PC-9 (cell line): ENCODE measurements at regions of chr15 and their contacts with region 1.

Region 1: GRCh38 chr15:75684642-75685041 is 28.0 kb downstream of the CSPG4 start:
- DNase-seq: no peak
- H3K4me3 ChIP-seq: no peak overlapping the region
- H3K27ac ChIP-seq: no peak overlapping the region
- H3K4me1 ChIP-seq: no peaks in the 10 kb centered on the region
- H3K27me3 ChIP-seq: no peaks in the 10 kb centered on the region
- CTCF ChIP-seq: no peak

Region 2: GRCh38 chr15:75204340-75205063 is 480.1 kb before region 1 on chr15:
- CTCF ChIA-PET with region 1: no interaction called
- POLR2A ChIA-PET with region 1: no interaction called
- intact Hi-C with region 1: no loop called
- DNase-seq: peak; percentile 89 to 93
- H3K4me3 ChIP-seq: peak overlapping the region; percentile 93
- H3K27ac ChIP-seq: peak overlapping the region; percentile 97
- H3K4me1 ChIP-seq: peaks cover 31% of the 10 kb centered on the region
- H3K27me3 ChIP-seq: no peaks in the 10 kb centered on the region
- CTCF ChIP-seq: peak; percentile 90

Region 3: DNA sequence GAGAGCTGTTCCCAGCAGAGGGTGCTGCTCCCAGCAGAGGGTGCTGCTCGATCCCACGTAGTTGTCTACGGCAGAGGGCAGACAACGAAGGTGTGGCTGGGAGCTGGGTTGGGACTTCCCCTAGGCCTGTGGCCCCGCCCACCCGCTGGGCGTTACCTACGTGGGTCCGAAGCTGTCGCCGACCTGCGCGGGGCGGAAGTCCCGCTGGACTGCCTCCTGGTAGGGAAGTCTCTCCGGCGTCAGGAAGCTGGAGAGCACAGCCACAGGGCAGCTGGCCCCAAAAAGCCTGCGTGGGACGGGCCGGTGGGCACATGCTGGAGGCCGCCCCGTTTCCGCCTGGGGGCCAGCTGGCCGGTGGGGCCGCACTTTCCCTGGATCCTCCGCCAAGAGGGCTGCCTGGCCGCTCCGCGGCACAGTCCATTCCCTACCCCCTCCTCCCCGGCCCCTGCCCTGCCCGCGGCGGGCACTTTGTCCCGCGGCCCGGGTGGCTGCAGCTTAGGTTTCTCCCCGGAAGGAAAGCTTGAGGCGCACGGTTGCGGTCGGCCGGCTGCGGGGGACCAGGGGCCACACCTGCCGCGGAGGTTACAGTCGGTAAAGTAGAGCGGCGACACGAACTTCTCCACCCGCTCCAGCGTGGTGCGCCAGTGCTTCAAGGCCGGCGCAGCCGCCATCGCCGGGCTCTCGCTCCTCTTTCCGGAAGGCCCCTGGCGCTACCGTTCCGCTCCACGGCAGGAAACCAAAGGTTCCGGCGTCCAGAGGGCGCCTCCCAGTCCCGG is 316.5 kb before region 1 on chr15 and contains the start of gene MAN2C1:
- CTCF ChIA-PET with region 1: interaction called, 7 read pairs
- POLR2A ChIA-PET with region 1: no interaction called
- intact Hi-C with region 1: loop called (anchors 2 kb)
- DNase-seq: peak; percentile 93 to 97
- H3K4me3 ChIP-seq: peak within 1 kb of the TSS; percentile 63
- H3K27ac ChIP-seq: peak within 1 kb of the TSS; percentile 79
- H3K4me1 ChIP-seq: peaks cover 25% of the 10 kb centered on the region
- H3K27me3 ChIP-seq: no peaks in the 10 kb centered on the region
- CTCF ChIP-seq: no peak; the same call in 1 of the 2 replicates
- total RNA-seq, gene MAN2C1: 94.3 and 143 TPM in 2 replicates

Region 4: DNA sequence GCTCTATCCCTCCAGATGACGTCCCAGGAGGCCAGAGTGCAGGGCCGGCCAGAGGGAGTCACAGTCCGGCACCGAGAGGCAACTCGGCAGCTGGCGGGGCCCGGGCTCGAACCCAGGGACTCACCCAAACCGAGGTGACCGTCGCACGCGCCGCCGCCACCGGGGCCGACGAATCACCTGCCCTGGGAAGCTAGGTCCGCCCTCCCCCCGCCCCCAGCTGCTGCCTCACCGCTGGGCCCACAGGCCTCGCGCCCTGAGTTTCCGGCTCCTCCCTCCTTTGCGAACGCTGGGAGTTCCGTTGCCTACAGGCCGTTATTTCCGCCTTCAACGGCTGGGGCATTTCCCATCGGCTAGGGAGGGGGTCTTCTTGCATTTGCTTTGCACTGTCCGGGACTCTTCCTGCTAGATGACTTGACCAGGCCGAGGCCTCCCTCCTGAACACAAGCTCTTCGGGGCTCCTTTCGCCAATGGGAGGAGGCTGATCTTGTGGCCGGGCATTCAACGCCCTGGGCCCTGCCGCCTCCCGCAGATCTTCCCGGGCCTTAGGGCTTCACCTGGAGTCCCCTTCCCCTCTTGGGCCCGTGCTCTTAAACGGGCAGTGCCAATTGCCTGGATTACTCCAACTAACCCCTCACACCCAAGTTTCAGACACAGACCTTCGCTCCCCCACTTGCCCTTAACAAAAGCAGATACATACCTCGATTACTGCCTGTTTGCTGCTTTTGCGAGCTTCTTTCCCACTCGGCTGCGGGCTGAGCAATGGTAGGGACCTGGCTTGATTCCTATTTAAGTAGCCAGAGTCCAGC is 58.9 kb before region 1 on chr15 and contains the start of gene SNUPN:
- CTCF ChIA-PET with region 1: interaction called, 3 read pairs
- POLR2A ChIA-PET with region 1: no interaction called
- intact Hi-C with region 1: loop called (anchors 2 kb)
- DNase-seq: peak; percentile 76 to 87
- H3K4me3 ChIP-seq: peak within 1 kb of the TSS; percentile 69
- H3K27ac ChIP-seq: peak within 1 kb of the TSS; percentile 73
- H3K4me1 ChIP-seq: peaks cover 22% of the 10 kb centered on the region
- H3K27me3 ChIP-seq: no peaks in the 10 kb centered on the region
- CTCF ChIP-seq: no peak
- total RNA-seq, gene SNUPN: 37.6 and 40.0 TPM in 2 replicates

Region 5: DNA sequence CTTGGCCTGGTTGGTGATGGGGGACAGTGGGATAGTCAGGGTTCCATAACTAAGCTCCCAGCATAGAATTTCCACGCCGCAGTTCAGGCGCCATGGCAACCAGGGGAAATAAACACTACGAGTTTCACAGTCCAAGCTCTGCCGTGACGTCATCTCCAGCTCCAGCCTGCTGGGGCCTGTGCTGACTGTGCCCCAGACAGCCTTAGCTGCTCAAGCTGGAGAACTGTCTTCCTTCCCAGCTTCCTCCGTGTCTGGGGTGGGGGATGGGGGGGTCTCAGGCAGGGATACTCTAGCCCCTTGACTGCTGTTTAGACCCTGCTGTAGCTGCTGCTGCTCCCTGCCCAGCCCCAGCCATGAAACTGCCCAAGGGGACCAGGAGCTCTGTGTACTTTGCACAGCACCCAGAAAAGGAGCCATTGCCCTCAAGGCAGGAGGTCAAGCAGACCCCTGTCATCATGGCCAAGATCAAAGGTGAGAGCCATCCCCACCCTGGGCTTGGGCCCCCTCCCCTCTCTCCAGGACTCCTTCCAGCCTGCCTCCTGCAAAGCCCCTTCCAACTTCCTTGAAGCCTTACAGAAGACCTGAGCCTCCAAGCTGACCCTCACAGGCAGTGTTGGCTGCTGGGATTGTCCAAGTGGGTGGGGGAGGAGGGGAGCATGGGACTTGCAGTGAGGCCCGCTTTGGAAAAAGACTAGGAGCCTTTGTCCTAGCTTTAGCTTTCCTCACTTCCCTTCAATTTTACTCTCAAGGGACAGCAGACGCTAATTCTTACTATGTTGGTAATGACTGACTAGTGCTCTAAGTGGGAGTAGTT is 39.4 kb after region 1 on chr15:
- CTCF ChIA-PET with region 1: interaction called, 3 read pairs
- POLR2A ChIA-PET with region 1: no interaction called
- intact Hi-C with region 1: loop called (anchors 1 kb)
- DNase-seq: peak in 1 of 2 experiments; percentile 76
- H3K4me3 ChIP-seq: no peak overlapping the region
- H3K27ac ChIP-seq: no peak overlapping the region
- H3K4me1 ChIP-seq: peaks cover 18% of the 10 kb centered on the region
- H3K27me3 ChIP-seq: no peaks in the 10 kb centered on the region
- CTCF ChIP-seq: no peak

Region 6: DNA sequence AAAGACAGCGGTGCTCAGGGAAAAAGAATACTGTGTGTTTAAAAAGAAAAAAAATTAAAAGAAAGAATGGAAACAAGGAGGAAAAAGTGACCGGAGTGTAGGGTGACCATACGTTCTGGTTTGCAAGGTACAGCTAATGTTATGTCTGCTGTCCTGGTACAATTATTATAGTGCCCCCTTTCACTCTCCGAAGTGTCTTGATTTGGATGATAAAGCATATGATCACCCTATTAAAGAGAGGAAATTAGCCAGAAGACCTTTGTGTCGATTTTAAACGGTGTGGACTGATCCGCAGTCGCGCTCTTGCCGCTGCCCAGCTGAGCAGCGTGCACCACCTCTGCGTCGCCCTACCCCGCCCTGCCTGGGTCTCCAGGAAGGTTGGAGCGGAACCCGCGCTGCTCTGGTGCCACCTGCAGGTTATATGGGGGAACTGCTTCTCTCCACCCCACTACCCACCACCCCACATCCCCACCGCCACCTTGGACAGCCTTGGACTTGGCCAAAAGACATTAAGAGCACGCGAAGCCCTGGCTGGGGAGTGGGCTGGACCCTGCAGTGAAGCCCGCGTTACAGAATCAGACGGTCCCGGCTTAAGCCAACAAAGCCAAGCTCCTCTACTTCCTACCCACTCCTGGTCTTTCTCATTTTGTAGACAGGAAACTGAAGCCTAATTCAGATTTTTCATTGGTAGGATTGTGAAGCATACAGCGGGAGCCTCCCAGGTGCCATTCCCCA is 117.4 kb after region 1 on chr15:
- CTCF ChIA-PET with region 1: interaction called, 14 read pairs
- POLR2A ChIA-PET with region 1: no interaction called
- intact Hi-C with region 1: loop called (anchors 1 kb)
- DNase-seq: peak in 1 of 2 experiments; percentile 78
- H3K4me3 ChIP-seq: peak overlapping the region; percentile 23; the same call in 1 of the 2 replicates
- H3K27ac ChIP-seq: no peak overlapping the region
- H3K4me1 ChIP-seq: peaks cover 5% of the 10 kb centered on the region; the same call in 1 of the 2 replicates
- H3K27me3 ChIP-seq: peaks cover 30% of the 10 kb centered on the region
- CTCF ChIP-seq: peak; percentile 82